ENCODE measurements at regions of chr1 and their contacts with region 1.

Region 1: GRCh38 chr1:165073185-165074007 is 283.1 kb downstream of the LMX1A start:
- DNase-seq: peak in 1 of 2 experiments; percentile 56
- H3K4me3 ChIP-seq: no peak overlapping the region
- H3K4me3 Mint-ChIP-seq: no peak overlapping the region
- H3K27ac Mint-ChIP-seq: no peak overlapping the region
- H3K4me1 ChIP-seq: 0 out of 2 replicates have a peak, but pooled peaks cover 4% of the 10 kb centered on the region
- H3K4me1 Mint-ChIP-seq: peaks cover 25% of the 10 kb centered on the region
- H3K27me3 ChIP-seq: no peaks in the 10 kb centered on the region
- H3K27me3 Mint-ChIP-seq: no peaks in the 10 kb centered on the region
- CTCF ChIP-seq: peak; percentile 78 to 82

Region 2: DNA sequence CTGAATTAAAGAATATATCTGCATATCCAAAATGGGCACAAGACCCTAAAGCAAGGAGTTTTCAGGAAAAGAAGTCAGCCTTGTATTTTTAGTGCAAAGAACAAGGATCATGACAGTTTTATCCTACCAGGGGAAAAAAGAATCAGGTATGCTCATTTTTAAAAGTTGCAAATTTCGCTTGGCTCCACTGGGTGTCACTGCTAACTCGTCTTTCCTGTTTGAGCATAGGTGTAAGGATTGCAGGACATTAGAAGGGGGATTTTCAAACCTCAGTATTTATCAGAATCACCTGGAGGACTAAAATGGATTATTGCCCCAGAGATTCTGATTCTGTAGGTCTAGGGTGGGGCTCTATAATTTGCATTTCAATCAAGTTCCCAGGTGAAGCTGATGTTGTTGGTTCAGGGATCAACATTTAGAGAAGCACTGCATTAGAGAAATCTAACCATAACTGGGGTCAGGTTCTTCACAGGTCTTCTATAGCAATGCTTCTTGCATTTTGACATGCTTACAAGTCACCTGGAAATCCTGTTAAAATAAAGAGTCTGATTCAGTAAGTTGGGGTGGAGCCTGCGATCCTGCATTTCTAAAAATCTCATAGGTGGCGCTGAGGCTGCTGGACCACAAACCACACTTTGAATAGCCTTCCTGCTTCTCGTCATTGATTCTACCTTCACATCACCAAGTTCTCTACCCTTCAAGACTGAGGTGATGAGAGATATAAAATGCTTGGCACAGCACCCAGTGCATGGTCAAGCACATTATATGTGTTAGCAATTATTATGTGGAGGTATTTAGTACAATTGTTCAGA is 1712.1 kb before region 1 on chr1:
- CTCF ChIA-PET with region 1: no interaction called
- POLR2A ChIA-PET with region 1: no interaction called
- intact Hi-C with region 1: loop called (anchors 1 kb)
- DNase-seq: peak in 1 of 2 experiments; percentile 39
- H3K4me3 ChIP-seq: no peak overlapping the region
- H3K4me3 Mint-ChIP-seq: no peak overlapping the region
- H3K27ac Mint-ChIP-seq: no peak overlapping the region
- H3K4me1 ChIP-seq: no peaks in the 10 kb centered on the region
- H3K4me1 Mint-ChIP-seq: peaks cover 6% of the 10 kb centered on the region
- H3K27me3 ChIP-seq: no peaks in the 10 kb centered on the region
- H3K27me3 Mint-ChIP-seq: peaks cover 2% of the 10 kb centered on the region
- CTCF ChIP-seq: peak; percentile 23 to 49

Region 3: GRCh38 chr1:163528710-163529348 is 1544.6 kb before region 1 on chr1:
- CTCF ChIA-PET with region 1: no interaction called
- POLR2A ChIA-PET with region 1: no interaction called
- intact Hi-C with region 1: loop called (anchors 5 kb)
- DNase-seq: peak in 1 of 2 experiments; percentile 42
- H3K4me3 ChIP-seq: no peak overlapping the region
- H3K4me3 Mint-ChIP-seq: no peak overlapping the region
- H3K27ac Mint-ChIP-seq: no peak overlapping the region
- H3K4me1 ChIP-seq: no peaks in the 10 kb centered on the region
- H3K4me1 Mint-ChIP-seq: no peaks in the 10 kb centered on the region
- H3K27me3 ChIP-seq: no peaks in the 10 kb centered on the region
- H3K27me3 Mint-ChIP-seq: peaks cover 2% of the 10 kb centered on the region
- CTCF ChIP-seq: peak; percentile 64 to 73

Region 4: DNA sequence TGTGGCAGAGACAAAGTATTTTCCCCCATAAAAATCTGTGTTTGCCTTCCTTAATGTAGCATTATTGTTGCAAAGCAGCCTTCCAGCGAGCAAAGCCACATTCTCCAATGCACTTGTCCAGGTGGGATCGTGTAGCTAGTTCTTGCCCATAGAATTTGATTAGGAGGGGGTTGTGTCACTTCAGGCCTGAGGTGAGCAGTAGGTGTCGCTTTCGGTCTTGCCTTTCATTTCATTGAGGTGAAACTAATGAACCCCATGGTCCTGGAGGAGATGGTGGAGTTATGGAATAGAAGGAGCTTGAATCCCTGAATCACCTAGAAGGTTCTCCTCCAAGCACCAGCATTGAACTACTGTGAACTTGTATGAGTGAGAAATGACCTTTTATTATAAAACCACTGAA is 833.3 kb before region 1 on chr1:
- CTCF ChIA-PET with region 1: interaction called, 3 read pairs
- POLR2A ChIA-PET with region 1: no interaction called
- intact Hi-C with region 1: loop called (anchors 1 kb)
- DNase-seq: peak; percentile 56 to 69
- H3K4me3 ChIP-seq: no peak overlapping the region
- H3K4me3 Mint-ChIP-seq: no peak overlapping the region
- H3K27ac Mint-ChIP-seq: no peak overlapping the region
- H3K4me1 ChIP-seq: no peaks in the 10 kb centered on the region
- H3K4me1 Mint-ChIP-seq: no peaks in the 10 kb centered on the region
- H3K27me3 ChIP-seq: no peaks in the 10 kb centered on the region
- H3K27me3 Mint-ChIP-seq: peaks cover 10% of the 10 kb centered on the region
- CTCF ChIP-seq: peak; percentile 48 to 64

Region 5: GRCh38 chr1:164891612-164892011 is 181.8 kb before region 1 on chr1:
- CTCF ChIA-PET with region 1: no interaction called
- POLR2A ChIA-PET with region 1: no interaction called
- intact Hi-C with region 1: loop called (anchors 1 kb)
- DNase-seq: peak in 1 of 2 experiments; percentile 28
- H3K4me3 ChIP-seq: no peak overlapping the region
- H3K4me3 Mint-ChIP-seq: no peak overlapping the region
- H3K27ac Mint-ChIP-seq: no peak overlapping the region
- H3K4me1 ChIP-seq: peaks cover 3% of the 10 kb centered on the region; the same call in 1 of the 2 replicates
- H3K4me1 Mint-ChIP-seq: peaks cover under 1% of the 10 kb centered on the region
- H3K27me3 ChIP-seq: no peaks in the 10 kb centered on the region
- H3K27me3 Mint-ChIP-seq: peaks cover 10% of the 10 kb centered on the region
- CTCF ChIP-seq: peak in 1 of 2 experiments; percentile 8

Region 6: GRCh38 chr1:164983023-164983650 is 90.3 kb before region 1 on chr1:
- CTCF ChIA-PET with region 1: no interaction called
- POLR2A ChIA-PET with region 1: no interaction called
- intact Hi-C with region 1: loop called (anchors 10 kb)
- DNase-seq: no peak
- H3K4me3 ChIP-seq: no peak overlapping the region
- H3K4me3 Mint-ChIP-seq: no peak overlapping the region
- H3K27ac Mint-ChIP-seq: no peak overlapping the region
- H3K4me1 ChIP-seq: no peaks in the 10 kb centered on the region
- H3K4me1 Mint-ChIP-seq: no peaks in the 10 kb centered on the region
- H3K27me3 ChIP-seq: no peaks in the 10 kb centered on the region
- H3K27me3 Mint-ChIP-seq: peaks cover 7% of the 10 kb centered on the region
- CTCF ChIP-seq: no peak

Measured in Caco-2 (cell line).